ENCODE measurements at regions of chr3 and their contacts with region 1.

Region 1: DNA sequence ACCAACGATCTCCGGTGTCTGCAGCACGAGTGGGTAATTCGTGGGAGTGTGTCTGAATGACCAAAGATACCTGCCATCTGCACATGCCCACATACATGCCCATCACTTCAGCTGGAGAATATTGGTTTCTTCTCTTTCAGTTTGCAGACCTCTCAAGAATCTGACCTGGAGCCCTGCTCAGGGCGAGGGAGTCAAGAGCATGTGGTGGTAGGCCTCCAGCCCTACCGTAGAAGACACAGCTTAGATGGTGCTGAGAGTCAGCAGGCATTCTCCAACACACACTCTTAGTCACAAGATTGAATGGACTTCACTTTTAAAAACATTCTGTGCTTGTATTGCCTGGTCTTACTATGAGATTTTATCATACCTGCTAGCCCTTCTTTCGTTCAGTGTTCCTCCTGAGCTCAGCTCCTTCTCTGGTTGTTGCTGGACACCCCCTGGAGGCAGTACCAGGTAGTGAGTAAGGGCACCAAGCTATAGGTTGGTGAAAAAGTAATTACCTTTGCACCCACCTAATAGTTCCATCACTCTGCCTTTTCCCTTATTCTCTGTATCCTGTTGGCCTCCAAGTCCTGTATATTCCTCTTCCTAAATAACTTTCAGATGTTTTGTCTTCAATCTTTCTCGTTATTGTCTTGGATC is 252.0 kb downstream of the CACNA2D3 start:
- DNase-seq: peak; percentile 62
- ATAC-seq: peak; percentile 94
- H3K4me3 Mint-ChIP-seq: no peak overlapping the region
- H3K27ac Mint-ChIP-seq: no peak overlapping the region
- H3K4me1 Mint-ChIP-seq: no peaks in the 10 kb centered on the region
- H3K27me3 Mint-ChIP-seq: no peaks in the 10 kb centered on the region
- CTCF ChIP-seq: peak; percentile 60

Region 2: DNA sequence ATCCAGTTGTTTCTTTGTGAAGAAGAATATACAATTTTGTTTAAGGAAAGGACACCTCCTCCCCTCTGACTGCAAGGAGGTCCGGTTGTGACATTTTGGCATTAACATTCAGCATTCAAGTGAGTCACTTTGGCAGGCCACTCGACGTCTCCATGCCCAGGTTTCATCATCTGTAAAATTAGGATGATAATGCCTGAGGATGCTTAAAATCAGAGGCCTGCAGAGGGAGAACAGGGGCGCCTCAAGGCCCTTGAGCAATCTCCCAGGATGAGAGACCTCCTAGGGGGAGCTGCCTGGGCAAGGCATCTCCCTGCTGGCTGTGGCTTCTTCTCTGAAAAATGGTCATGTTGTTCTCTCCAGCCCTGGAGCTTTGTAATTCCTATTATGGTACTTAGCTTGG is 16.0 kb before region 1 on chr3:
- CTCF ChIA-PET with region 1: interaction called, 13 read pairs
- POLR2A ChIA-PET with region 1: no interaction called
- DNase-seq: no peak
- ATAC-seq: peak; percentile 34; the same call in 1 of the 2 replicates
- H3K4me3 Mint-ChIP-seq: no peak overlapping the region
- H3K27ac Mint-ChIP-seq: no peak overlapping the region
- H3K4me1 Mint-ChIP-seq: peaks cover 18% of the 10 kb centered on the region
- H3K27me3 Mint-ChIP-seq: no peaks in the 10 kb centered on the region
- CTCF ChIP-seq: no peak

Measured in WTC11 (cell line).